Activated CD4-positive, alpha-beta memory T cell treated with anti-CD3 and anti-CD28 coated beads for 36 hours (primary cell): ENCODE measurements at regions of chr17 and their contacts with region 1.

Region 1: DNA sequence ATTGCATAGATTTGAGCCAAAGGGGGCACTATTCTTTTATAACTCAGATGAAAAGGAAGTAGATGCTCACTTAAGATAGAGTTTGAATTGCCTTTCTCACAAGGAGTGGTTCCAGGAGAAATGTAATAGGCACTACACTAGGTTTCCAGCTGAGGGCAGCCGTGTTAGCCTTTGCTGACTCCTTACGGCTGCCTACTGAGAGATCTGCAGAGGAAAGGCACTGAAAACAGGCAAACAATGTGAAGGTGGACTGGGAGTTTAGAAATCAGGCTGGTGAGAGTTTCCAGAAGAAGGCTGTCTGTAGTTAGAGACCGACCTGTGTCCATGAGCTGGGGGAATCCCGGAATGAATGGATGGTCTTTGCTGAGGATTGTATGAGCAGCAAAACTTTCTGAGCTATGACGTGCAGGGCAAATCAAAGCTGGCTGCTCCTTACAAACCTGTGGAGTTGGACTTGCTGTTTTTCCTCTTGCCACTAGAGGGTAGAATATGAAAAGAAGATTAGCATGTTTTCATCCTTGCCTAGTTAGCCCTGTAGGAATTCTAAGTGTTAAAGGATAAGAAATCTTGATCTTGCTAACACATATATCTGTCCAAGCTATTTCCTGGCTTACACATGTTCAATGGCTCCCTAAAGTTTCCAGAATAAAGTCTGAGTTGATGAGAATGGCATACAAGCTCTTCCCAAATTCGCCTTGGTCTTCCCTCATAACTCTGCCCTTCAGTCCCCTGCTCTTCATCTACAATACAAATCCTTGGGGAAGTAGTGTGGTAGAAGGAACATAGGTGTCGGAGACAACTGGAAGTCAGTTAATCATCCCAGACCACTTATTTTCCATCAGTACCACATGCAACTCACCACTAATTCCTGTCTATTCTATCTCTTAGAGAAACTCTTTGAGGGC is 20.1 kb upstream of the TAOK1 start:
- DNase-seq: peak; percentile 63
- H3K4me3 Mint-ChIP-seq: no peak overlapping the region
- H3K27ac Mint-ChIP-seq: no peak overlapping the region
- H3K4me1 Mint-ChIP-seq: no peaks in the 10 kb centered on the region
- H3K27me3 Mint-ChIP-seq: no peaks in the 10 kb centered on the region

Region 2: GRCh38 chr17:29389982-29390850 is 20.1 kb after region 1 on chr17 and contains the start of gene TAOK1:
- CTCF ChIA-PET with region 1: interaction called, 43 read pairs
- POLR2A ChIA-PET with region 1: no interaction called
- intact Hi-C with region 1: no loop called
- DNase-seq: peak; percentile 98
- H3K4me3 Mint-ChIP-seq: peak within 1 kb of the TSS; percentile 95
- H3K27ac Mint-ChIP-seq: peak within 1 kb of the TSS; percentile 85
- H3K4me1 Mint-ChIP-seq: peaks cover 36% of the 10 kb centered on the region
- H3K27me3 Mint-ChIP-seq: no peaks in the 10 kb centered on the region
- total RNA-seq, gene TAOK1: 29.8 to 34.3 TPM

Region 3: GRCh38 chr17:29451121-29451742 is 81.1 kb after region 1 on chr17:
- CTCF ChIA-PET with region 1: interaction called, 10 read pairs
- POLR2A ChIA-PET with region 1: no interaction called
- intact Hi-C with region 1: no loop called
- DNase-seq: no peak
- H3K4me3 Mint-ChIP-seq: no peak overlapping the region
- H3K27ac Mint-ChIP-seq: no peak overlapping the region
- H3K4me1 Mint-ChIP-seq: peaks cover 18% of the 10 kb centered on the region
- H3K27me3 Mint-ChIP-seq: no peaks in the 10 kb centered on the region

Region 4: GRCh38 chr17:29495011-29495410 is 124.9 kb after region 1 on chr17:
- CTCF ChIA-PET with region 1: interaction called, 12 read pairs
- POLR2A ChIA-PET with region 1: no interaction called
- intact Hi-C with region 1: no loop called
- DNase-seq: no peak
- H3K4me3 Mint-ChIP-seq: no peak overlapping the region
- H3K27ac Mint-ChIP-seq: no peak overlapping the region
- H3K4me1 Mint-ChIP-seq: peaks cover 2% of the 10 kb centered on the region
- H3K27me3 Mint-ChIP-seq: no peaks in the 10 kb centered on the region

Region 5: GRCh38 chr17:29524460-29525091 is 154.5 kb after region 1 on chr17:
- CTCF ChIA-PET with region 1: interaction called, 20 read pairs
- POLR2A ChIA-PET with region 1: no interaction called
- intact Hi-C with region 1: no loop called
- DNase-seq: no peak
- H3K4me3 Mint-ChIP-seq: no peak overlapping the region
- H3K27ac Mint-ChIP-seq: no peak overlapping the region
- H3K4me1 Mint-ChIP-seq: no peaks in the 10 kb centered on the region
- H3K27me3 Mint-ChIP-seq: no peaks in the 10 kb centered on the region

Region 6: GRCh38 chr17:29549177-29549923 is 179.3 kb after region 1 on chr17:
- CTCF ChIA-PET with region 1: interaction called, 14 read pairs
- POLR2A ChIA-PET with region 1: no interaction called
- intact Hi-C with region 1: no loop called
- DNase-seq: no peak
- H3K4me3 Mint-ChIP-seq: no peak overlapping the region
- H3K27ac Mint-ChIP-seq: no peak overlapping the region
- H3K4me1 Mint-ChIP-seq: peaks cover 10% of the 10 kb centered on the region
- H3K27me3 Mint-ChIP-seq: no peaks in the 10 kb centered on the region

Region 7: GRCh38 chr17:29589524-29590410 is 219.7 kb after region 1 on chr17 and contains the start of gene GIT1:
- CTCF ChIA-PET with region 1: interaction called, 25 read pairs
- POLR2A ChIA-PET with region 1: no interaction called
- intact Hi-C with region 1: no loop called
- DNase-seq: peak; percentile 88
- H3K4me3 Mint-ChIP-seq: peak within 1 kb of the TSS; percentile 94
- H3K27ac Mint-ChIP-seq: peak within 1 kb of the TSS; percentile 90
- H3K4me1 Mint-ChIP-seq: peaks cover 74% of the 10 kb centered on the region
- H3K27me3 Mint-ChIP-seq: no peaks in the 10 kb centered on the region
- total RNA-seq, gene GIT1: 51.3 to 54.4 TPM

Region 8: DNA sequence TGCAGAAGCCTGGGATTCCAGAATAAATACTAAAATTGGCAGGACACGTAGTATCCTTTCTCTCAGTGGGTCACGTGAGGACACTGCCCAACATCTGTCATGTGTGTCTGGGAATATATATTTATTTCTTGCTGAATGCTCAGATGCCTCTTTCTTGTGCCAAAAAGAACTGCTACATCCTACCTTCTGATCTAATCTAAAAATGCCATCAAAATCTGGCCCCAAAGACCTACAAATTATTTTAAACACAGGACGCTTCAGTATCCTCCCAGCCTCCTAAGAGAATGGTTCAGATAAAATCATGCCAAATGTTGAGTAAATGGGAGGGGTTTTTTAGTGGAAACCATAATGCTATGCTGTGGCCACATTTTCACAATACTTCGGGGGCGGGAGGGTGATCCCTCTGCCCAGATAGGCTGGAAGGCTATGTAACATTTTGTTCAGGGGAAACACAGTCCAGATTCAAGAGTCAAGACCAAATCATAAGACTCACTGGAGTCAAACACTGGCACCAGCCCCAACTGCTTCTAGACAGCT is 275.5 kb after region 1 on chr17:
- CTCF ChIA-PET with region 1: no interaction called
- POLR2A ChIA-PET with region 1: no interaction called
- intact Hi-C with region 1: no loop called
- DNase-seq: peak; percentile 26
- H3K4me3 Mint-ChIP-seq: no peak overlapping the region
- H3K27ac Mint-ChIP-seq: peak overlapping the region; percentile 64
- H3K4me1 Mint-ChIP-seq: peaks cover 16% of the 10 kb centered on the region
- H3K27me3 Mint-ChIP-seq: no peaks in the 10 kb centered on the region